HEK293 (cell line): ENCODE measurements at regions of chr2 and their contacts with region 1.

Region 1: GRCh38 chr2:164599966-164600589 is 21.2 kb downstream of the GRB14 start:
- H3K4me3 ChIP-seq: no peak overlapping the region
- H3K27ac ChIP-seq: no peak overlapping the region
- H3K4me1 ChIP-seq: no peaks in the 10 kb centered on the region
- CTCF ChIP-seq: peak; percentile 66

Region 2: DNA sequence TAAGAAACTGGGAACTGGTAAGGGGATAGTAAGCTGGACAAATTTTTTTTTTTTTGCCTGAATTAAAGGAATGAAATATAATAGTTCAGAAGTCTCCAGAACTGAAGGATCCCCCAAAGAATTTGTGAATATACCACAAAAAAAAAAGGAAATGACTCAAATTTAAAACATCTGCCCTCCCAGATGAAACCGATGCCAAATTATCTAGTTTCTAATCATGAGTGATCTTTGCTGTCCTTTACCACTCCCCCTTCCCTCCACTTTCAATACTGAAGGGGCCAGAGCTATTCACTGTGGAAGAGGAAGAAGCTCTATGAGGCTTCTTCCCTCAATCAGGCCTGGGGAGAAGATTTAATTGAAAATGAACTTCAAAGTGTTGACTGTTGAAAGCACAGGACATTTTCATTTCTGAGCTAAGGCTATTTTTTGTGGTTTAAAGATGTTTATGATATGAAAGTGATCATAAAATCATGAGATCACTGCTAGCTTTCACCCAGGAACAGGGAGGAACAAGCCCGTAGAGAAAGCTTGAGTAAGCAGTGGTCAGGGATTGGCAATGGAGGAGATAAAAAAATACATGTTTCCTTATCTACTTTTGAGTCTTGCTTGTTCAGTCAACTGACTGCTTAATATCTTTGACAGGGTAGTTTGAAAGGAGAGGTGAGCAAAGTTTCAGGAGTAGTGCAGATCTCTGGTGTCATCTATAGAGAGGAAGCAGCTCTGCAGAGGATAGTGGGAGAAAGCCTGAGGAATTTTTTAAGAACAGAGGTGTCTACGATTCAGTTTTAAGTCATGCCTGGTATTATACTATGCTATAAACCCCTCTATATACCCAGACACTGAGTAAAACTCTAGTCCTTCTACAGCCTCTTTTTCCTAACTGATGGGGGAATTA is 454.7 kb before region 1 on chr2:
- CTCF ChIA-PET with region 1: no interaction called
- POLR2A ChIA-PET with region 1: no interaction called
- H3K4me3 ChIP-seq: no peak overlapping the region
- H3K27ac ChIP-seq: no peak overlapping the region
- H3K4me1 ChIP-seq: no peaks in the 10 kb centered on the region
- CTCF ChIP-seq: no peak

Region 3: DNA sequence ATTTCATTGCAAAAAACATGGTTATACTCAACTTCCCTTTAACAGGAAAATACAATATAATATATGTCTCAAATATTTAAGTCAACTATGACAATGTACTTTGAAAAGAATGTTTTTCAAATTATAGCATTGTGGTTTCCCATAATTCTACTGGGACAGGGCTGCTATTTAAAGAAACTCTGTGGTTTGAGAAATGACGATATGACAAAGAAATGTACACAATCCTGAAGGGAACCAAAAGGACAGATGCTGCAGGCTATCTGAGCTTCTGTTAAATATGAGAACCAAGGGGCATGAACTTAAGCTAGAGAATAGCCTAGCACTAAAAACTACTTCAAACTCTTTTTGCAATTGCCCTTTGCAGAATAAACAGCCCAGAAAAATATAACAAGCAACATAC is 394.7 kb before region 1 on chr2:
- CTCF ChIA-PET with region 1: no interaction called
- POLR2A ChIA-PET with region 1: no interaction called
- H3K4me3 ChIP-seq: no peak overlapping the region
- H3K27ac ChIP-seq: no peak overlapping the region
- H3K4me1 ChIP-seq: no peaks in the 10 kb centered on the region
- CTCF ChIP-seq: no peak

Region 4: DNA sequence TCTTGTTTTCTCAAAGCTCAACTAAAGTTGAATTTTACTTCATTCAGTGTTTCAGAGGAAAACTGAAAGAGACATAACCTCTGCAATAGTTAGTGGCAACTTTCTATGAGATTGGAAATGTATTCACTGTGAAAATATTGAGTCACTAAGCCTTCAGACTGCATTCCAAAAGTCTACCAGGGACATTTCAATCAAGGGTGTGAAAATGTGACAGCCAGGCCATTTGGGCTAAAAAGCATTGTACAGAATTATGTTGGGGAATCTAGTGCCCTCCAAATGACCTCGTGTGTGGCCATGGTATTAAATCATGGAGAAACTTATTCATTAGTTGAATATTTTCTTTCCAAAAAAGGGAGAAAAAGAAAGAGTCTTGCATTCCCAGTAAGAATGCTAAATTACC is 230.7 kb before region 1 on chr2:
- CTCF ChIA-PET with region 1: no interaction called
- POLR2A ChIA-PET with region 1: no interaction called
- H3K4me3 ChIP-seq: no peak overlapping the region
- H3K27ac ChIP-seq: no peak overlapping the region
- H3K4me1 ChIP-seq: no peaks in the 10 kb centered on the region
- CTCF ChIP-seq: no peak

Region 5: DNA sequence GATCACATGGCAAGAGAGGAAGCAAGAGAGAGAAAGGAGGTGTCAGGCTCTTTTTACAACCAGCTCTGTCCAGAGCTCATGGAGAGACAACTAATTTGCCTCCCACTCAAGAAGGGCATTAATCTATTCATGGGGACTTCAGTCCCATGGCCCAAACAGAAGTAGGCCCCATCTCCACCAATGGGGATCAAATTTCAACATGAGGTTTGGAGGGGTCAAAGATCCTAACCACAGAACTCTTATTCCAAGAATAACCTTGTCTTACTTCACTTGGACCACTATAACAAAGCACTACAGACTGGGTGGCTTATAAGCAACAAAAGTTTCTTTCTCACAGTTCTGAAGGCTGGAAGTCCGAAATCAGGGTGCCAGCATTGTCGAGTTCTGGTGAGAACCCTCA is 10.6 kb before region 1 on chr2:
- CTCF ChIA-PET with region 1: interaction called, 25 read pairs
- POLR2A ChIA-PET with region 1: no interaction called
- H3K4me3 ChIP-seq: no peak overlapping the region
- H3K27ac ChIP-seq: no peak overlapping the region
- H3K4me1 ChIP-seq: peaks cover 4% of the 10 kb centered on the region
- CTCF ChIP-seq: no peak

Region 6: DNA sequence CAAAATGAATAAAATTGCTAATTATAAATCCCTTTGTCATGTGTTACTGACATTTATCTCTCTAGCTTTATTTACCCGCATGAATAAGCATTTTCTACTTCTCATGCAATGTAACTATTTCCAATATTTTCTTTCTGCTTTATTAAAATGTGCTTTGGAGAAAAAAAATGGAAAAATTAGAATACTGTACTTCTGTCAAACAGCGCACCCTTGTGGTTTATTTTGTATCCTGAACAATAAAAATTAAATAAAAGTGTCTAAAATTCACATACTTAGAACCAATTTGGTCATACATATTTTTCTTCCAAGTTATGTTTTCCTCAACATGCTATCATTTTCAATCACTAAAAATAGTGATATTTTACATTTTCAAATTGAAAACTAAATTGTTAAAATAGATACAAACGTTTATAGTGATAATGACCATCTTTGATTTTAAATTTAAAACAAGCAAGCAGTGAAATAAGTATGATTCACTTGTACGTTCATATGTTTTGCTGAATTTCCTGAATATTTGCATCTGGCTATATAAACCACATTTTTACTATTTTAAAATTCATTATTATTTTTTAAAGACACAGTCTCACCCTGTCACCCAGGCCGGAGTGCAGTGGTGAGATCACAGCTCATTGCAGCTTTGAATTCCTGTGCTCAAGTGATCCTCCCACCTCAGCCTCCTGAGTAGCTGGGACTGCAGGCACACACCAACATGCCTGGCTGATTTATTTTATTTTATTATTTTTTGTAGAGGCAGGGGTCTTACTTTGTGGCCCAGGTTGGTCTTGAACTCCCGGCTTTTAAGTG is 117.1 kb after region 1 on chr2:
- CTCF ChIA-PET with region 1: no interaction called
- POLR2A ChIA-PET with region 1: no interaction called
- H3K4me3 ChIP-seq: no peak overlapping the region
- H3K27ac ChIP-seq: no peak overlapping the region
- H3K4me1 ChIP-seq: no peaks in the 10 kb centered on the region
- CTCF ChIP-seq: no peak